ENCODE measurements at regions of chr9 and their contacts with region 1.

Region 1: DNA sequence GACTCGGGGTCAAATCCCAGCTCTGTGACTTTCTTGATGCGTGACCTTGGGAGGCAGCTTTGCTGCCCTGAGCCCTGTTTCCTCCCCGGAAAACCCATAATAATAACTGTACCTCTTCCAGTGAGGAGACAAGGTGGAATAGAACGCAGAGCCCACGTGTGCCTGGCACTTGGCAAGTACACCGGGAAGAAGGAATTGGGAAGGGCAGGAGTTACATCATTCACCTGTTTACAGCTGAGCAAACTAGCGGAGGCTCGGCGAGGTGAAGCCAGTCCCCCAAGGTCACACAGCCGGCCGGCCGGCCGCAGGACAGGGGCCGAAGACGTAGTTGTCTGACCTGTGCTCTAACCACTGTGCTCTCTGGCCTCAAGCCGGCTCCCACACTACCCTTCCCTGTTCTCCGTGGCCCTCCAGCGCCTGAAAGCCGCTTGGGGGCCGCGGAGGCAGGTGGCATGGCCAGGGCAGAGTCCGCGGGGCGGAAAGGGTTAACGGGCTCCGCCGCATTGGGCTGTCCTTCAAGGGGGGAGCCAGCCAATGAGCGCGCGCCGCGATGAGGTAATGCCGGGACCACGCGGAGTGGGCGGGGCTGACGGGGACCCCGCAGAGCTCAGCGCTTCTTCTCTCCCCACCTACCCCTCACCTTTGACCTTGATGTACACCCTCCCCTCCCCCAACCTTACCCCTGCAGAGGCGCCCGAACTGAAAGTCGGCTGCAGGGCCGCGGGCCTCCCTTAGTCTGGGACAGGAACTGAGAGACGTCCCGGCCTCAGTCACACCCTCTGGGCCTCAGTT is 125.2 kb downstream of the C9orf50 start:
- H3K4me3 Mint-ChIP-seq: peak overlapping the region; percentile 97
- H3K27ac Mint-ChIP-seq: peak overlapping the region; percentile 86
- H3K4me1 Mint-ChIP-seq: peaks cover 76% of the 10 kb centered on the region
- H3K27me3 Mint-ChIP-seq: peaks cover 2% of the 10 kb centered on the region

Region 2: DNA sequence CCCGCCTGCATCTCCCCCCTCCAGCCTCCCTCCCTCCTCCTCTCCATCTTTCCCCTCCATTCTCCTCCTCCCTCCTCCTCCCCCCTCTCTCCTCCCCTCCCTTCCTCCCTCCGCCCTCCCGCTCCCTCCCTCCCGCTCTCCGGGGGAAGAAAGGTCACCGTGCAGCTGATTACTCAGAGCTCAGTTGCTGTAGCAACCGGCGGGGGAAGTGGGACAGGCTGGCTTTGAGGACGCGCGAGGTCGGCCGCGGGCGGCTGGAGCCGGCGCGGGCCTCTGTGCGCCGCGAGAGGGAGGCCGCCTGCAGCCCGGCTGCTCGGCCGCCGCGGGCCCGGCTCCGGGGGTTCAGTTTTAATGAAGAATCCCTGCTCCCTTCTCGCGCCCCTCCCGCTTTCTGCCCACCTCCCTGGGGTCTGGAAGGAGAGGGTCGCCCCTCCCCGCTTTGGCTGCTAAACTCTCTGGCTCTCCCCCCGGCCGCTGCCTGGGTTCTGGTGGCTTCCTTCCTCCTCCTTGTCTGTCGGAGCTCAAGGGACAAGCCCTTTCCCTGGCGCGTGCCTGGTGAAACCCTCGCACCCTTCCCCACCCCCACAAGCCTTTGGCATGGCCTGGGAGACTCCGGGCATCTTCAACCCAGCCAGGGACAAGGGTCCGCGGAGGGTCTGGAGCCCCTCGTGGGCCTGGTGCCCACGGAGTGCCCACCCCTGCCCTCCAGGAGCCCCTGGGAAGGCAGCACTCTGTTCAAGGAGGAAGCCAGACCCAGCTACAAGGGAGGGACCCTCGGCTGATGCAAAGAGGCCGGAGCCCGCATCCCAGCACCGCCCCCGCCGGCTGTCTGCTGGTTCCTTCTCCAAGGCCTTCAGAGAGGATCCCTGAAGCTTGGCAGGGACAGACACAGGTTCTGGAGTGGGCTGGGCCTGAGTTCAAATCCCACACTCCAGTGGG is 35.1 kb before region 1 on chr9:
- intact Hi-C with region 1: loop called (anchors 1 kb)
- H3K4me3 Mint-ChIP-seq: peak overlapping the region; percentile 82
- H3K27ac Mint-ChIP-seq: peak overlapping the region; percentile 99
- H3K4me1 Mint-ChIP-seq: peaks cover 60% of the 10 kb centered on the region
- H3K27me3 Mint-ChIP-seq: peaks cover 1% of the 10 kb centered on the region

Region 3: DNA sequence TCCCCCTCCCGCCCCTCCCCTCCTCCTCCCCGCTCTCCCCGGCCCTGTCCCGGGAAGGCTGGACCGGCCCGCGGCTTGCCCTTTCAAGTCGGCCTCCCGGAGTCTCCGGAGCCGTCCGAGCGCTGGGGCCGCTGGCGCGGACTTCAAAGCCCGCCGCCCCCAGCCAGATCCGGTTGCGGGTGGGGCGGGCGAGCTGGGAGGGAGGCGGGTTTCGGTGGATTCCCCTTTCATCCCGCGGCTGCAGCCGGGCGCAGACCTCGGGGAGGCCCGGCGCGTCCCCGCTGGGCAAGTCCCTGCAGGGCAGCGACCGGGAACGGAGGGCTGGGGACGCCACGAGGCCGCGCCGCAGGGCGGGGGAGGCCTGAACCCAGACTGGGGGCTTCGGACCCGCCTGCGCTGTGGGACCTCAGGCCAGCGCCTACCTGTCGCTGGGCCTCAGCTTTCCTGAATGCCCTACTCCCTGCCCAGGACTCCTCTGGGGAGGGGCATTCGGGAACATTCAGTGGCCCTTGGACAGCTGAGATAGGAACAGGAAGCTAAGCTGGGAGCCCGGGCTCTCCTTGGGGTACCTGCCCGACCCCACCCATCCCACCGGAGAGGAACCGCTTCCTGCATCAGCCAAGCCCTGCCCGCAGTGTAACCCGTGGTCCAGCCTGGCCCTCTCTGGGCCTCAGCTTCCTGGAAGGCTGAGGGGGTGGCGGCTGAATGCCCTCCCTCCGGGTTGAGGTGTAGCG is 101.8 kb after region 1 on chr9:
- intact Hi-C with region 1: loop called (anchors 10 kb)
- H3K4me3 Mint-ChIP-seq: peak overlapping the region; percentile 18
- H3K27ac Mint-ChIP-seq: no peak overlapping the region
- H3K4me1 Mint-ChIP-seq: peaks cover 62% of the 10 kb centered on the region
- H3K27me3 Mint-ChIP-seq: peaks cover 19% of the 10 kb centered on the region

Measured in dendritic cell treated with granulocyte-macrophage colony-stimulating factor and Interleukin-4, amounts not matched to agents 40 ng/mL and 50 ng/mL, for 4 days (primary cell).